Tibial artery (tissue), 4 donors: ENCODE measurements at regions of chr1 and their contacts with region 1.

Region 1: DNA sequence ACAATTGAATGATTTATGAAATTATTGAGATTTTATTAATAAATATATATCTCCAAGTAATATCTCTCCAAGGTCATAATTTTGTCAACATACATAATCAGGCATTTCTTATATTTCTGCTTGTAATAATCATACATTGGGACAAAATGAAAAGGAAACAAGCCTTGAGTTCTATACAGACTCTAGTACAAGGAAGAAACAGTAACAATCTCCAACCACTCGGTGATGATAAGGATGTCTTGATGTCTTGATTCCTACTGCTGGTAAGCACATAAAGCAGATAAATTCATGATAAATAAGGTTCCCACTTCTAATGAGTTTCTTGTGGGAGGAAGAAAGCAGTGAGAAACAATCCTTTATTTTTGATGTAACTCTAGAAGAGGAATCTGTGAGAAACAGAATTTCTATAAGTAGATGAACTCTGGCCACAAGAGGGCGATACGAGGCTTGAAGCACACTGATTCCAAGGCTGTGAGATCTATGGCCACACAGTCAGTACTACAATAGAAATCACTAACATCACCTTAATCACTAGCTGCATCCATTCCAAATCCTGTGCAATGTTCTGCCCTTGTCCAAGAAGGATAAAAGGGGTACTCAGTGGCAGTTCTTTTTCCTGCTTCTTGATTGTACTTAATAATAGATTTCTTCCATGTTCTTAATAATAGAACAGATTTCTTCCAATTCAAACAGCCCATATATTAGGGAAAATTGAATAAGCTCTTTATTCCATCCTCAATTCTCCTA is 41.4 kb upstream of the LRRC8B start:
- DNase-seq: peak in 1 of 2 donors; percentile 75
- H3K4me3 ChIP-seq: no peak overlapping the region
- H3K27ac ChIP-seq: no peak overlapping the region
- H3K4me1 ChIP-seq: no peaks in the 10 kb centered on the region
- H3K27me3 ChIP-seq: no peaks in the 10 kb centered on the region
- CTCF ChIP-seq: peak; percentile 68 to 71

Region 2: GRCh38 chr1:89394851-89395250 is 88.3 kb before region 1 on chr1:
- intact Hi-C with region 1: no loop called
- DNase-seq: no peak
- H3K4me3 ChIP-seq: no peak overlapping the region
- H3K27ac ChIP-seq: no peak overlapping the region
- H3K4me1 ChIP-seq: no peaks in the 10 kb centered on the region
- H3K27me3 ChIP-seq: no peaks in the 10 kb centered on the region
- CTCF ChIP-seq: no peak

Region 3: GRCh38 chr1:89451011-89451410 is 32.2 kb before region 1 on chr1:
- intact Hi-C with region 1: no loop called
- DNase-seq: no peak
- H3K4me3 ChIP-seq: no peak overlapping the region
- H3K27ac ChIP-seq: no peak overlapping the region
- H3K4me1 ChIP-seq: no peaks in the 10 kb centered on the region
- H3K27me3 ChIP-seq: no peaks in the 10 kb centered on the region
- CTCF ChIP-seq: no peak

Region 4: GRCh38 chr1:89598450-89599331 is 115.5 kb after region 1 on chr1:
- intact Hi-C with region 1: loop called (anchors 5 kb)
- DNase-seq: no peak
- H3K4me3 ChIP-seq: no peak overlapping the region
- H3K27ac ChIP-seq: no peak overlapping the region
- H3K4me1 ChIP-seq: no peaks in the 10 kb centered on the region
- H3K27me3 ChIP-seq: no peaks in the 10 kb centered on the region
- CTCF ChIP-seq: peak; percentile 61 to 65

Region 5: DNA sequence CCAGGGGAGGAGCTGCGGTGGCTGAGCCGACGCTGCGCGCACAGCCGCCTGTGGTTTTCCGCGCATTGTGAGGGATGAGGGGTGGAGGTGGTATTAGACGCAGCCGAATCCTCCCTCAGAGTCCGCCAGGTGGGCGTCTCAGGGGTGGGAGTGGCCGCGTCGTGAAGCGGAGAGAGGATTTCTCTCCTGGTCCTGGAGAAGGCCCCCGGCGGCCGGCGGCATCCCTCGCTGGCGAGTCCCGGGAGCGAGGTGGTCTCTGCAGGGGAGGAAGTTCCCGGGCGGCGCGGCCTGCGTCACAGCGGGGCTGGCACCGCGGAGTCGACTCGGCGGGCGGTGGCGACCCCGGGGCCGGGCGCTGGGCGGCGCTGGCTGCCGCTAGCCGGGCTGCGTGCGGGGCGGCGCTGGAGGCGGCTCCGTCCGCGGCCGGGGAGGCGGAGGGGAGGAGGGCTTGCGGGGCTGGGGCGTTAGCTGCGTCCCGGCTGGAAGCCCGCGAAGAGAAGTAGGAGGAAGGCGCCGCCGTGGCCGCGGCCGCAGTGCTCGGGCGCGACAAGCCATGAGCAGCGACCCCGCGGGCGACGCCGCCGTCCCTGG is 149.6 kb after region 1 on chr1 and contains the start of gene LRRC8C:
- intact Hi-C with region 1: no loop called
- DNase-seq: peak; percentile 66 to 90
- H3K4me3 ChIP-seq: peak within 1 kb of the TSS; percentile 80 to 88
- H3K27ac ChIP-seq: peak within 1 kb of the TSS; percentile 79 to 83
- H3K4me1 ChIP-seq: peaks cover 0 to 20% (median 6%) of the 10 kb centered on the region in 4 donors
- H3K27me3 ChIP-seq: no peaks in the 10 kb centered on the region
- CTCF ChIP-seq: peak; percentile 26 to 59

Region 6: GRCh38 chr1:89794406-89794805 is 311.2 kb after region 1 on chr1:
- intact Hi-C with region 1: no loop called
- DNase-seq: no peak
- H3K4me3 ChIP-seq: no peak overlapping the region
- H3K27ac ChIP-seq: no peak overlapping the region
- H3K4me1 ChIP-seq: no peaks in the 10 kb centered on the region
- H3K27me3 ChIP-seq: no peaks in the 10 kb centered on the region
- CTCF ChIP-seq: no peak